ENCODE measurements at regions of chr9 and their contacts with region 1.

Region 1: DNA sequence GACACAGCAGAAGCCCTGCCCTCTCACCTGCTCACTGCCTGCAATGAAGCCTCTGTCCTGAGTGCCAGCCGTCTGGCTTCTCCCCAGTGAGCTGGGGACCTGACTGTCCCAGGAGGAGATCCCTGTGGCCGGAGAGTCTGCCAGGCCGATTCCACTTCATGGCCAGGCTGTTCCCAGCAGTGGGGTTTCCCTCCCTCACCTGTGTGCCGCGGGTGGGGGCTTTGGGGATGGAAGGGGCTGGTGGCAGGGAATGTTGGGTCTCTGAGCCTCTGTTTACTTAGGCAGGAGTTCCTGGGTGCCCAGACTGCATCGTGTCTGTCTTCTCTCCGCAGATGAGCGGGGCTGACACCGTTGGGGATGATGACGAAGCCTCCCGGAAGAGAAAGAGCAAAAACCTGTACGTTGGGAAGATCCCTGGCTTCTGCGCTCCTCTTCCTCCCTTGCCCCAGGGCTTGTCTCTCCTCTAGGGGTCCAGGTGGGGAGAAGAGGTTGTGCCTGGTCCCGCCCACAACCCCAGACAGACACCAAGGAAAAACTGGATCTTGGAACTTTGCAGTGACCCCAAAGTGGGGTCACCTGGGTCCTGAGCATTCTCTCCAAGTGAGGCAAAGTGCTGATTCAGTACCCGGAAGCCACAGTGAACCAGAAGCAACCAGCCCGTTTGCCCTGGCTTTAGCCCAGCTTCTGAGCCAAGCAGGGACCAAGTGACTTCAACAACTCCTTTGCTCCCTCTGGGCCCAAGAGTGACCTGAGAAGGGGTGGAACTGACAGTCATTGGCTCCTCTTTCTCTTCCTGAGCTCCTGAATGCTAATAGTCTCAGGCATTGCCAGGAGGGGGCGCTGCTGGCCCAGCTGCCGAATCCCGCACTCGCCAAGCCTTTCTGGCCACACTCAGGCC is 127.7 kb downstream of the RGS3 start:
- DNase-seq: peak; percentile 64 to 80 (median 75)
- H3K4me3 ChIP-seq: no peak overlapping the region
- H3K27ac ChIP-seq: peak overlapping the region in 1 of 2 experiments; percentile 50
- H3K4me1 ChIP-seq: peaks cover 16 to 86% (median 80%) of the 10 kb centered on the region in 4 experiments
- H3K27me3 ChIP-seq: no peaks in the 10 kb centered on the region

Region 2: DNA sequence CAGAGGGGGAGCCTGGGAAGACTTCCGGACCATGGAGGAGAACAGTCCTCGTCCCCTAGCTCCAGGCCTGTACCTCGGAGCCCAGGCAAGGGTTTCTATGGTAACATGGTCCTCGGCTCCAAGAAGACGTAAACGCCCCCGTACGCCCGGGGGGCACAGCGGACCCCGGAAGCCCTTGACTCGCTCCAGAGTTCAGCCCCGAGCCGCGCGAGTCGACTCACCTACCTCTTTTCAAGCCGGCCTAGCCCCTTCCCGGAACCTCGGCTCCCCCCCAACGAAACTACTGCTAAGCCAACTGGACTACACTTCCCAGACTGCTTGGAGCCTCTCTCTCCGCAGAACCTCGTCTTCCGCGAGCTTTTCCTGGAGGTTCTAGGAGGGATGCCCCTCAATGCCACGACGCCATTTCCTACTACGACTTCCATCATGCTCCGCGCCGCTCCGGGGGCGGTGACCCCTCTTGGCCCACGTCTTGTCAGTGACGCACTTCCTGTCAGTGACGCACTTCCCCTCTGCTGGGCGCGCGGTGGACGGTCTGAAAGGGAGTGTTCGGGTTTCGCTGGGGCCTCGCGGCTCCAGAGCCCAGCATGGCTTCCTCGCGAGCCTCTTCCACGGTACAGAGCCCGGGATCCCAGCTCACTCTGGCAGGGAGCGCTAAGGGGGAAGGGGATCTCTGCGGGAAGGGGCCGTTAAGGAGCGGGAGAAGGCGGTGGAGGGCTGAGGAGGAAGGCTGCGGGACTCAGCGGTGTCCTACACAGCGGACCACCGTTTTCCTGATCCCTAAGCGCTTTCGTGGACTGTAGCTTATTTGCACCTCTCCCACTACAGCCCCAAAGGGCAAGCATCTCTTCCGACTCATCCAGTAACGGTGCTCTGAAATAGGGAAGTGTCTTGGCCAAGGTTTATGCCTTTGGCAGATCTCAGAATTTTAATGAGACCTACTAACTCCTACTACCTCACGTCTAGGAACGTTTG is 315.8 kb before region 1 on chr9 and contains the starts of genes CDC26 and PRPF4:
- CTCF ChIA-PET with region 1: interaction called, 18 read pairs
- POLR2A ChIA-PET with region 1: interaction called, 3 read pairs
- DNase-seq: peak; percentile 99
- H3K4me3 ChIP-seq: peak within 1 kb of the TSS; percentile 69 to 99 (median 82)
- H3K27ac ChIP-seq: peak within 1 kb of the TSS; percentile 98 to 99
- H3K4me1 ChIP-seq: peaks cover 10 to 27% (median 15%) of the 10 kb centered on the region in 4 experiments
- H3K27me3 ChIP-seq: no peaks in the 10 kb centered on the region

Region 3: DNA sequence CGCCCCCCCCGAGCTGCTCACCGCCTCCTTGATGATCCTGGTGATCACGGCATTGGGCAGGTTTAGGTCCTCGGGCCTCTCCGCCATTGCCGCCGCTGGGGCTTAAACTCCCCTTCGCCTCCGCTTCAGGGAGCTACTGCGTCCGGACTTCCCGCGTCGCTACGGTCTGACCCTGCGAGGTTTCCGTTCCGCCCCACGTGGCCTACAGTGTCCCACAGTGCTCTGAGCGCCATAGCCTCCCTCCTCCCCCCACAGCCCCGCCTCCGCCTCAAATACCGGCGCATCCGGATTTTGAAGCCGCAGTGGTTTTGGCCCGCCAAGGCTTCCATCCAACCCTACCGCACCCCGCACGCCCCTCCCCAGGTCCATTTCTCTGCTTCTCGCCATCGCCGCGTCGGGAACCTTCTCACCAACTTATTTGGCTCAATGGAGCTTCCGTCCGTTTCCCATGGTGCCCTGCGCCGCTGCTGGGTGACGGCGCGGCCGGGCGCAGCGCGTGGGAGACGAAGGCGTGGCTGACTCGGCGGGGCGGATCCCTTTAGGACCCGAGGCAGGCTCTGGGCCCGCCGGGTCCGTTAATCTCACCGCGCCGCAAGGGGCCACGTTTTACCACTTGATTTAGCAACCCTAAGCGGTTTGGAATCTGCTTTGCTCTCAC is 180.9 kb before region 1 on chr9 and contains the starts of genes C9orf43 and POLE3:
- CTCF ChIA-PET with region 1: interaction called, 69 read pairs
- POLR2A ChIA-PET with region 1: interaction called, 3 read pairs
- DNase-seq: peak; percentile 97 to 99 (median 98)
- H3K4me3 ChIP-seq: peak within 1 kb of the TSS; percentile 57 to 99 (median 93)
- H3K27ac ChIP-seq: peak within 1 kb of the TSS; percentile 83 to 91
- H3K4me1 ChIP-seq: peaks cover 8 to 38% (median 26%) of the 10 kb centered on the region in 4 experiments
- H3K27me3 ChIP-seq: no peaks in the 10 kb centered on the region

Region 4: DNA sequence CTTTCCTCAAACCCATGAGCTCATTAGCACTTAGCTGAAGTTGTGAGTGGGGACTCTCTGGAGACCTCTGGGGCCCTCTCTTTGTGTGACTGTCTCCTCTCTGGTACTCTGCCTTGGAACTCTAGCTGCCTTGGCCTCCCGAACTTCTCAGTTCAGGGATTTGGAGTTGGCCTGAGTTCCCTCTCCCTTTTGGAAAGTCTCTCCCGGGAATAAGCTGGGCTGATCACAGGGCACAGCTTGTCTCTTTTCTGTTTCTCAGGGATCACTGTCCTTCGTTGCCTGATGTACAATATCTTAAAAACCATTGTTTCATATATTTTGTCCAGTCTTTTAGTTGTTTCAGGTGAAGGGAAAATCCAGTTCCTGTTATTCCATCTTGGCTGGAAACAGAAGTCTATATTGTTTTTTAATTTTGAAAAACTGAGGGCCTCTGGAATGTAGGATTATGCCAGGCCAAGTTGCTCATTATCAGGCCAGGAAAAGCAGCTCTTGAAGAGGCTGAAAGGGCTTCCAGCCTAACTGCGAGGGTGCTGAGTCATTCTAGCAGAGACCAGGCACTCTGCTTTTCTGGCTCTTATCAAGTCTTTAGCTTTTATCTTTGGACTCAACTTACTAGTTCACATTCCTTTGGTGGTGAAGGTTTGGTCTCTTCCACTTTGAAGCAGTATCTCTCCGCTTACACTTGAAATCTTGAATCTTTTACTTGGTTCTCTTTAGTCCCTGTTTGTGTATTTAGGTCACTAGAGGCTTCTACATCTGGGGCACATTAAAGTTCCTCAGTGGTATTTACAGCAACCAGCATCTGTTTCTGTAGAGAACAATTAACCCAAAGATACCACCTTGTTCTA is 136.1 kb before region 1 on chr9:
- CTCF ChIA-PET with region 1: interaction called, 26 read pairs
- POLR2A ChIA-PET with region 1: no interaction called
- DNase-seq: peak; percentile 63 to 81 (median 72)
- H3K4me3 ChIP-seq: no peak overlapping the region
- H3K27ac ChIP-seq: peak overlapping the region; percentile 12 to 75
- H3K4me1 ChIP-seq: peaks cover 0 to 22% (median 12%) of the 10 kb centered on the region in 4 experiments
- H3K27me3 ChIP-seq: no peaks in the 10 kb centered on the region

Region 5: GRCh38 chr9:113526841-113527240 is 64.4 kb before region 1 on chr9:
- CTCF ChIA-PET with region 1: interaction called, 11 read pairs
- POLR2A ChIA-PET with region 1: no interaction called
- DNase-seq: no peak
- H3K4me3 ChIP-seq: no peak overlapping the region
- H3K27ac ChIP-seq: no peak overlapping the region
- H3K4me1 ChIP-seq: peaks cover 2 to 28% (median 27%) of the 10 kb centered on the region in 4 experiments
- H3K27me3 ChIP-seq: no peaks in the 10 kb centered on the region

Region 6: GRCh38 chr9:113602126-113603044 is 11.1 kb after region 1 on chr9:
- CTCF ChIA-PET with region 1: interaction called, 15 read pairs
- POLR2A ChIA-PET with region 1: no interaction called
- DNase-seq: peak in 2 of 3 donors; percentile 80 to 82
- H3K4me3 ChIP-seq: no peak overlapping the region
- H3K27ac ChIP-seq: no peak overlapping the region
- H3K4me1 ChIP-seq: peaks cover 0 to 22% (median 3%) of the 10 kb centered on the region in 4 experiments
- H3K27me3 ChIP-seq: no peaks in the 10 kb centered on the region

Region 7: GRCh38 chr9:114662081-114662989 is 1071.1 kb after region 1 on chr9:
- CTCF ChIA-PET with region 1: no interaction called
- POLR2A ChIA-PET with region 1: no interaction called
- DNase-seq: peak; percentile 42 to 63 (median 56)
- H3K4me3 ChIP-seq: no peak overlapping the region
- H3K27ac ChIP-seq: no peak overlapping the region
- H3K4me1 ChIP-seq: peaks cover 0 to 8% (median 5%) of the 10 kb centered on the region in 4 experiments
- H3K27me3 ChIP-seq: no peaks in the 10 kb centered on the region

Measured in common myeloid progenitor, CD34-positive (primary cell).